ENCODE measurements at regions of chr6 and their contacts with region 1.

Region 1: GRCh38 chr6:83067448-83068413 is at the start of gene DOP1A:
- DNase-seq: peak; percentile 98
- H3K4me3 ChIP-seq: peak within 1 kb of the TSS; percentile 91
- H3K27ac ChIP-seq: peak within 1 kb of the TSS; percentile 80
- H3K4me1 ChIP-seq: peaks cover 25% of the 10 kb centered on the region
- H3K27me3 ChIP-seq: no peaks in the 10 kb centered on the region
- CTCF ChIP-seq: peak; percentile 99
- total RNA-seq, gene DOP1A: 25.1 and 31.9 TPM in 2 replicates

Region 2: DNA sequence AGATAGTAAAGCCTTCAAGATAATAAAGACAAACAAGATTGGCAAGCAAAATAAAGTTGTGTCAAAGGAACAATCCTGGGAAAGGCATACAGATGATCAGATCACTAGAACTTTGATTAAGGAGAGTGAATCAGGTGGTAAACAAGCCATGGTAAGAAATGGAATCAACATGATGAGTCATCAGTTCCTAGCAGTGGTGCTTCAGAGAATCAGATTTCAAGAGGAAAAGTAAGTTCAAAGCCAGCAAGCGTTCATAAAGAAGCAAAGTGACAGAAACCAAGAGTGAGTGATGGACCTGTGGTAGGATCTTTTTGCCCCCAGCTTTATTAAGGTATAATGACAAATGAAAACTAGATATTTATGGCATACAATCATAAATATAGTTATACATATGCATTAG is 363.7 kb before region 1 on chr6:
- CTCF ChIA-PET with region 1: no interaction called
- POLR2A ChIA-PET with region 1: no interaction called
- intact Hi-C with region 1: no loop called
- DNase-seq: no peak
- H3K4me3 ChIP-seq: no peak overlapping the region
- H3K27ac ChIP-seq: no peak overlapping the region
- H3K4me1 ChIP-seq: no peaks in the 10 kb centered on the region
- H3K27me3 ChIP-seq: no peaks in the 10 kb centered on the region
- CTCF ChIP-seq: no peak

Region 3: GRCh38 chr6:83119742-83120300 is 52.1 kb after region 1 on chr6:
- CTCF ChIA-PET with region 1: no interaction called
- POLR2A ChIA-PET with region 1: no interaction called
- intact Hi-C with region 1: no loop called
- DNase-seq: no peak
- H3K4me3 ChIP-seq: no peak overlapping the region
- H3K27ac ChIP-seq: no peak overlapping the region
- H3K4me1 ChIP-seq: no peaks in the 10 kb centered on the region
- H3K27me3 ChIP-seq: no peaks in the 10 kb centered on the region
- CTCF ChIP-seq: no peak

Region 4: DNA sequence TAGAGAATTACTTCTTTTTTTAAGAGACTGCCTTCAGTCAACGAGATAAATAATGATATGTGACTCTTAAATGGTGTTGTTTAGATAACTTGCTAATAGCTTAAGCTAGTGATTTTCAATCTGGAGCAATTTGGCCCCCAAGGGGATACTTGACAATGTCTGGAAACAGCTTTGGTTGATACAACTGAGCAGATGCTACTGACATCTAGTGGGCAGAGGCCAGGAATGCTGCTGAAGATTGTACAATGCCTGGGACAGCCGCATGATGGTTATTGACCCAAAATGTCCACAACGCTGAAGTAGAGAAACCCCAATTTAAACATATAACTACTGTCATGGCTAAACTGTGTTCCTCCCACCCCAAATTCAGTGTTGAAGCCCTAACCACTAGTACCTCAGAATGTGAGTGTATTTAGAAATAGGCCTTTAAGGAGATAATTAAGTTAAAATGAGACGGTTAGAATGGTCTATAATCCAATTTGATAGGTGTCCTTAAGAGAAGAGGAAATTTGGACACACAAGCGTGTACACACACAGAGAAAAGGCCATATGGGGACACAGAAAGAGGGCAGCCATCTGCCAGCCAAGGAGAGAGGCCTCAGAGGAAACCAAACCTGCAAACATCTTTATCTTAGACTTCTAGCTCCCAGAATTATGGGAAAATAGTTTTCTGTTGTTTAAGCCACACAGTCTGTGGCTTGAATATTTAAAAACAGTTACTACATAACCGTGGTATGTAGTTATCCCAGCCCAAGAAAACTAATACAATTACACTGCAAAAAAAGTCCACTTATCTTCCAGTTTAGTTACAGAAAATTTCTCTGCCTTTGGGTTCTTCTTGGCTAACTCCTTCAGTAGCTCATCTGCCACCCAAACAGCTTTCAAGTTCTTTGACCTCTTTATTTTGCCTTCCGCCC is 147.7 kb after region 1 on chr6:
- CTCF ChIA-PET with region 1: interaction called, 42 read pairs
- POLR2A ChIA-PET with region 1: no interaction called
- intact Hi-C with region 1: loop called (anchors 1 kb)
- DNase-seq: peak; percentile 92
- H3K4me3 ChIP-seq: no peak overlapping the region
- H3K27ac ChIP-seq: peak overlapping the region; percentile 53
- H3K4me1 ChIP-seq: peaks cover 36% of the 10 kb centered on the region
- H3K27me3 ChIP-seq: no peaks in the 10 kb centered on the region
- CTCF ChIP-seq: peak; percentile 93

Region 5: GRCh38 chr6:83365931-83366330 is 298.2 kb after region 1 on chr6:
- CTCF ChIA-PET with region 1: no interaction called
- POLR2A ChIA-PET with region 1: no interaction called
- intact Hi-C with region 1: loop called (anchors 10 kb)
- DNase-seq: peak; percentile 78
- H3K4me3 ChIP-seq: no peak overlapping the region
- H3K27ac ChIP-seq: peak overlapping the region; percentile 95
- H3K4me1 ChIP-seq: peaks cover 56% of the 10 kb centered on the region
- H3K27me3 ChIP-seq: no peaks in the 10 kb centered on the region
- CTCF ChIP-seq: no peak

Region 6: DNA sequence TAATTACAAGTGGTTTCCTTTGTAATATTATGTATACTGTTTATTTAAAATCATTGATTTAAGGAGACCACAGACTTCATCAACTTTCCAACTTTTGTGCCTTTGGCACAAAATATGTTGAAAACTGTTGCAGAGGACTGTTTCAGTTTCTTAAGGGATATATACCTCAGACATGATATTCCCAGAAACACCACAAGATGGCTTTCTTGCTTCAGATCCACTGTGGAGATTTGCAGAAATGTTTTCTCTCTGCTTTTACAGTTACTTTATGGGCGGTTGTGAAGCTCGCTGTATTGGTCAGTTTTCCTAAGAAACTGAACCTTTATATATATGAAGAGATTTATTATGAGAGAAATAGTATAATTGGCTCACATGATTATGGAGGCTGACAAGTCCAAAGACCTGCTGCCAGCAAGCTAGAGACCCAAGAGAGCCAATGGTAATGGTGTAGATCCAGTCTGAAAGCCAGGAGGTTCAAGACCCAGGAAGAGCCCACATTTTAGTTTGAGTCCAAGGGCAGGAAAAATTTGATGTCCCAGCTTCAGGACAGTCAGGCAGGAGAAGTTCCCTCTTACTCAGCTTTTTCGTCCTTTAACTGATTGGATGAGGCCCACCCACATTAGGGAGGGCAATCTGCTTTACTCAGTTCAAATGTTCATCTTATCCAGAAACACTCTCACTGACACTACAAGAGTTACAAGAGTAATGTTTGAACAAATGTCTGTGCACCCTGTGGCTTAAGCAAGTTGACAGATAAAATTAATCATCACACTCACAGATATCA is 350.3 kb after region 1 on chr6:
- CTCF ChIA-PET with region 1: no interaction called
- POLR2A ChIA-PET with region 1: no interaction called
- intact Hi-C with region 1: loop called (anchors 10 kb)
- DNase-seq: peak; percentile 77
- H3K4me3 ChIP-seq: no peak overlapping the region
- H3K27ac ChIP-seq: peak overlapping the region; percentile 39
- H3K4me1 ChIP-seq: peaks cover 14% of the 10 kb centered on the region
- H3K27me3 ChIP-seq: no peaks in the 10 kb centered on the region
- CTCF ChIP-seq: peak; percentile 73

Region 7: GRCh38 chr6:84872996-84873723 is 1805.4 kb after region 1 on chr6:
- CTCF ChIA-PET with region 1: no interaction called
- POLR2A ChIA-PET with region 1: no interaction called
- intact Hi-C with region 1: no loop called
- DNase-seq: peak; percentile 19
- H3K4me3 ChIP-seq: no peak overlapping the region
- H3K27ac ChIP-seq: peak overlapping the region; percentile 69
- H3K4me1 ChIP-seq: peaks cover 17% of the 10 kb centered on the region
- H3K27me3 ChIP-seq: no peaks in the 10 kb centered on the region
- CTCF ChIP-seq: no peak

Measured in A673 (cell line).